CD4-positive, alpha-beta T cell (primary cell): ENCODE measurements at regions of chr11 and their contacts with region 1.

Region 1: DNA sequence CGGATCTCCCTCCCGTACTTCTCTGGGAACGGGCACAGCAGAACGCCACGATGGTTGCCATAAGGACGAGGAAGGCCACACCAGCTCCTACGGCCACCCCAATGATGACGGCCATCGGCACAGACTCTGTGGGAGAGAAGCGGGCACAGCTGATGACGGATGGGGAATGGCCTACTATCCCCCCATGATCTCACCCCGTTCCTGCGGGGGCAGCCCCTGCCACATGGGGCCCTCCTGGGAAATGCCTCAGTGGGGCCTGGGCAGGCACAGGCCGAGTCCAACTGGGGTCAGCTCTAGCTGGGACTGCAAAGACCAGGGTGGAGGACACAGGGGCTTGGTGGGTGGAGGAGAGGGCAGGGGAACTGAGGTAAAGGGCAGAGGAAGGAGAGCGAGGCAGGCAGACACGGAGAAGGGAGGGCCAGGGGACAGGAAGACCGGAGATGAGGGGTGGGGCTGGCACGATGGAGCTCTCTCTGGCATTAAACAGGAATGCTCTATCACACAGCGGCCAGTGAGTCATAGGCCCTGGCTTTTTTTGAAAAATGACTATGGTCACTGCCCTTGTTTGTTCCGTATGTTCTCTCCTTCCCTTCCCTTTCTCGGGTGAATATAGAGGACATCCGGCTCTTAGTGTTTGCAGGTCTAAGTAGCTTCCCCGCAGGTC is 76.0 kb downstream of the ST3GAL4 start:
- DNase-seq: no peak
- ATAC-seq: no peak
- H3K4me3 ChIP-seq: no peak overlapping the region
- H3K4me3 Mint-ChIP-seq: no peak overlapping the region
- H3K27ac ChIP-seq: no peak overlapping the region
- H3K27ac Mint-ChIP-seq: no peak overlapping the region
- H3K4me1 ChIP-seq: no peaks in the 10 kb centered on the region
- H3K4me1 Mint-ChIP-seq: no peaks in the 10 kb centered on the region
- H3K27me3 ChIP-seq: no peaks in the 10 kb centered on the region
- H3K27me3 Mint-ChIP-seq: no peaks in the 10 kb centered on the region
- CTCF ChIP-seq: no peak

Region 2: GRCh38 chr11:126874831-126875230 is 443.3 kb after region 1 on chr11:
- CTCF ChIA-PET with region 1: no interaction called
- POLR2A ChIA-PET with region 1: no interaction called
- intact Hi-C with region 1: loop called in 1 of 2 experiments (anchors 10 kb)
- DNase-seq: no peak
- ATAC-seq: no peak
- H3K4me3 ChIP-seq: no peak overlapping the region
- H3K4me3 Mint-ChIP-seq: no peak overlapping the region
- H3K27ac ChIP-seq: no peak overlapping the region
- H3K27ac Mint-ChIP-seq: no peak overlapping the region
- H3K4me1 ChIP-seq: no peaks in the 10 kb centered on the region
- H3K4me1 Mint-ChIP-seq: no peaks in the 10 kb centered on the region
- H3K27me3 ChIP-seq: no peaks in the 10 kb centered on the region
- H3K27me3 Mint-ChIP-seq: peaks cover 9% of the 10 kb centered on the region
- CTCF ChIP-seq: no peak